ENCODE measurements at regions of chr2 and their contacts with region 1.

Region 1: GRCh38 chr2:174771631-174772471 is 7.6 kb upstream of the CHRNA1 start:
- DNase-seq: peak; percentile 85 to 93
- H3K4me3 ChIP-seq: no peak overlapping the region; a peak in 2 of 8 replicates
- H3K27ac ChIP-seq: peak overlapping the region; percentile 80
- H3K4me1 ChIP-seq: peaks cover 11 to 19% (median 12%) of the 10 kb centered on the region in 4 experiments
- H3K27me3 ChIP-seq: no peaks in the 10 kb centered on the region
- CTCF ChIP-seq: peak; percentile 79 to 94 (median 86)
- EP300 ChIP-seq: peak in 1 of 2 experiments; percentile 66; a peak in 1 of 3 replicates
- POLR2A ChIP-seq: peak in 1 of 2 experiments; percentile 52; a peak in 2 of 3 replicates
- RAD21 ChIP-seq: peak; percentile 91 to 95

Region 2: DNA sequence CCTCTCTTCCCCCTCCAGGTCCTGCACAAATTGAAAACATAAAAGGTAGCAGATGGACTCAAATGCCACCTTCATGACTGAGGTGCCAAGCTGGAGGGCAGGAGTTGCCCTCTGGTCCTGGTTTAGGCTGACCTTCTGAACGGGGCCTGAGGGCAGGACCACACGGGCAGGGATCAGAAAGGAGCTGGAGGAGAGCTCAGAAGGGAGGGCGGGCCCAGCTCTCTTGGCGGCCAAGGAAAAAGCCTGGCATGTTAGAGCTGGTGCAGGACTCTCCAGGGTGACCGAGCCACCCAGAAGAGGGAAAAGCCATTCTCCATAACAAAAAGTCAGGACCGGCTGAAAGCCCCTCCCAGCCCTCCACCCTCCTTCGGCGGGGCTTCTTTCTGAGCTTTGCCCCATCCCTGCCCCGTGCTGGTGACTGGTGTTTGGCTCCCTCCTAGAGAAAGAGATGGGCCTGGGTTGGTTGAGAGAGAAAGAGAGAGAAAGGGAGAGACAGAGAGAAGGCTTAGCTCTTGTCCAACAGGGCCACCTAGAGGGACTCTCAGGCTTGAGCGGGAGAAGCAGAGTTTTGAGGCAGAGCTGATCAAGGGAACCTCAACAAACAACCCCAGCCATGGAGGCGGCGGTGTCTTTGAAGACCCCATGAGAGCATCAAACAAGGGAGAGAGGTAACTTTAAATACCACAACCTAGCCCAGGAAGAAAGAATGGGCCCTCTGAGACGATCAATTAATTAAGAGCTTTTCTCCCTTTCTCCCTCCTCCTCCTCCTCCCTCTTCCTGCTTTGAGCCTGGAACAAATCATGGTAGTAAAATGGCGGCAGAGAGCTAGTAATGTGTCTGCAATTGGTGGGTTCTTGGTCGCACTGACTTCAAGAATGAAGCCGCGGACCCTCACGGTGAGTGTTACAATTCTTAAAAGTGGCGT is 225.0 kb before region 1 on chr2:
- CTCF ChIA-PET with region 1: no interaction called
- POLR2A ChIA-PET with region 1: no interaction called
- DNase-seq: peak; percentile 38 to 65
- H3K4me3 ChIP-seq: no peak overlapping the region
- H3K27ac ChIP-seq: no peak overlapping the region
- H3K4me1 ChIP-seq: peaks cover 0 to 2% (median 0%) of the 10 kb centered on the region in 4 experiments; a peak in 1 of 7 replicates
- H3K27me3 ChIP-seq: no peaks in the 10 kb centered on the region
- CTCF ChIP-seq: peak; percentile 31 to 74 (median 74)
- EP300 ChIP-seq: no peak; a peak in 1 of 3 replicates
- POLR2A ChIP-seq: no peak
- RAD21 ChIP-seq: peak; percentile 78 to 88

Region 3: DNA sequence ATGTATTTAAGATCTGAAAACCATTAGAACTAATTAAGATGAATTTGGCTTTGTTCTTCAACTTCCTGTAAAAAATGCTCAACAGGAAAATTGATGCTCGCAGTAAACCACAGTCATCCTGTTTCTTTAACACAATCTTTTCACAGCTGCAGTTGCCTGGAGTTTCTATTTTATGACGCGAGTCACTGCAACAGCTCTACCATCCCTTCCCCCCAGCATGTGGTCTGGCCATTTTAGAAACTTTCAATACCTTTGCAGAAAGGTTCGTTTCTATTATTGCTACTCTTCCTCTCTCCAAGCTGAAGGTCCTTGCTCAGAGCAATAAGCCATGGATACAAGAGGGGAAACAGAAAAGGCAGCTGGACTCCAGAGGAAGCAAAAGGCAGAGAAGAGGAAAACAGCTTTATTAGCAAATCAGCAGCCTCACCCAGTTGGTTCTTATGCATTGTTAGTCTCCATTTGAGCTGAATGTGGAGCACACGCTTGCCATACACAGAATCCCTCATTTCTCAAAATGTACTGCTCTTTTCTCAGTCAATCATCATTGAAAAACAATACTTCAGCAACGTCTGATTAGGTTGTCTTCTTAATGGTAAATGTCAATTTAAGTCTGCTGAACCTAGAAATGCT is 178.2 kb before region 1 on chr2:
- CTCF ChIA-PET with region 1: no interaction called
- POLR2A ChIA-PET with region 1: no interaction called
- DNase-seq: no peak
- H3K4me3 ChIP-seq: no peak overlapping the region
- H3K27ac ChIP-seq: no peak overlapping the region; the same call in 1 of the 2 replicates
- H3K4me1 ChIP-seq: peaks cover 0 to 5% (median 4%) of the 10 kb centered on the region in 4 experiments; a peak in 3 of 7 replicates
- H3K27me3 ChIP-seq: no peaks in the 10 kb centered on the region
- CTCF ChIP-seq: no peak
- EP300 ChIP-seq: no peak
- POLR2A ChIP-seq: no peak
- RAD21 ChIP-seq: no peak

Region 4: DNA sequence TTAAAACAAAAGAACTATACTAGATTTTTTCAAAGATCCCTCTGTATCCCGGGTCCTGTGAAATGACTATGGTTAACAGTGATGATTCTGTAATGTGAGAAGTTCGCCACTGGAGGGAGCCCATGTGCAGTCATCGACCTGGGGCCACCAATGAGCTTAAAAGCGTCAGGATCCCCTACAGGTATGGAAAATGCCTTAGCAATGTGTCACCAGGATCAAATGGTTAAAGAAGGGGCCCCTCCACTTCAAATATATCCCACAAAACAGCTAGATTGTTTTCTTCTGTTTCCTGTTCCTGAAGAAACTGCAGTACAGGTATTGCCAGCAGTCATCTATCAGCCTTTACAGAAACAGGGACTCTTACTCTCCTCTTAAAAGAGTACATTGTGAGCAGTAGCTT is 22.9 kb before region 1 on chr2:
- CTCF ChIA-PET with region 1: interaction called, 68 read pairs
- POLR2A ChIA-PET with region 1: interaction called, 15 read pairs
- DNase-seq: peak; percentile 66 to 89
- H3K4me3 ChIP-seq: no peak overlapping the region; a peak in 1 of 8 replicates
- H3K27ac ChIP-seq: no peak overlapping the region
- H3K4me1 ChIP-seq: peaks cover 0 to 2% (median 1%) of the 10 kb centered on the region in 4 experiments; a peak in 3 of 7 replicates
- H3K27me3 ChIP-seq: no peaks in the 10 kb centered on the region
- CTCF ChIP-seq: peak; percentile 67 to 89 (median 82)
- EP300 ChIP-seq: no peak
- POLR2A ChIP-seq: no peak
- RAD21 ChIP-seq: peak; percentile 96 to 97

Region 5: GRCh38 chr2:174797781-174798276 is 26.0 kb after region 1 on chr2:
- CTCF ChIA-PET with region 1: interaction called, 82 read pairs
- POLR2A ChIA-PET with region 1: interaction called, 4 read pairs
- DNase-seq: no peak
- H3K4me3 ChIP-seq: no peak overlapping the region
- H3K27ac ChIP-seq: 0 out of 2 replicates have a peak overlapping the region, but pooled peaks have one; percentile 4
- H3K4me1 ChIP-seq: peaks cover 6 to 22% (median 13%) of the 10 kb centered on the region in 4 experiments; a peak in 5 of 7 replicates
- H3K27me3 ChIP-seq: peaks cover 0 to 1% (median 0%) of the 10 kb centered on the region in 4 experiments; a peak in 1 of 7 replicates
- CTCF ChIP-seq: no peak
- EP300 ChIP-seq: no peak
- POLR2A ChIP-seq: 0 out of 3 replicates have a peak, but pooled peaks of 1 of the 2 experiments have one; percentile 28
- RAD21 ChIP-seq: no peak

Region 6: DNA sequence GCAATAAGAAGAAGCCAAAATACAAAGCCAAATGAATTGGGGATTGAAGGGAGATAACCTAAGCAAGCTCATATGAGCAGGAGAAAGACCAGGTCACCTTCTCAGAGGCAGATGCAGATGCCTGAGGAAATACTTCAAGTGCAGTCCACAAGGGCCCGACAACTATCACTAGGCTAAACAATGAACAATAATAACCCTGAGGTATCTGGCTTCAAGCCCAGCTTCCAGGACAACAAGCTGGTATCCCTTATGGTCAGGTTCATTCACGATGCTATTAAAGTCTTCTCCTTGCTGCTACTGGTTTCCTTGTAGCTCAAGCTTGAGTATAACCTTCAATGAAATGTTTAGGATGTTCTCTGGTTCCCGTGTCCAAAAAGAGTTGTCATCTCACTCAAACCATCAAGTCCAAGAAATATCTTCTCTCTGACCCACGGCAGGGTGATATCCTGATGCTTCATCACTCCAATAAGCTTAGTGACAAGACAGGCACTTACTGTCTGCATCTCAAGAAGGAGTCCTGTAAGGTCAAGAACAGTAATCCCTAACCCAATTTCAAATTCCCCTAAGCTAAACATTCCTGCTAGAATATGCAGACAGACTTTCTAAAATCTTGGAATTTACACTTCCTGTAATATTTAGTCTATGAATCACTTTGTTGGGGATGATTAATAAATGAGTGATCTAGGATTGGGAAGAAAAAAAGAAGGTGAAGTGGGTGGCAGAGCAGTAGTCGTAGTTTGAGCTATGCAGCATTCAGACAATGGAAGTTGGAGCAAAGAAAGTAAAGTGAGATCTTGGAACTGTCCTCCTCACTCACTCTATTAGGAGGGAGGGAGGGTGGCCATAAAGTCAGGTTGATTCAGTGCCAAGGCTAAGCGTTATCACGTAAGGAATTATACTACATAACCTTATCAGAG is 200.3 kb after region 1 on chr2:
- CTCF ChIA-PET with region 1: interaction called, 12 read pairs
- POLR2A ChIA-PET with region 1: no interaction called
- DNase-seq: no peak
- H3K4me3 ChIP-seq: no peak overlapping the region
- H3K27ac ChIP-seq: no peak overlapping the region
- H3K4me1 ChIP-seq: peaks cover 0 to 8% (median 3%) of the 10 kb centered on the region in 4 experiments; a peak in 2 of 7 replicates
- H3K27me3 ChIP-seq: no peaks in the 10 kb centered on the region
- CTCF ChIP-seq: no peak
- EP300 ChIP-seq: no peak
- POLR2A ChIP-seq: no peak
- RAD21 ChIP-seq: no peak

Region 7: GRCh38 chr2:175004980-175005732 is 233.3 kb after region 1 on chr2 and contains the start of gene CHN1:
- CTCF ChIA-PET with region 1: interaction called, 11 read pairs
- POLR2A ChIA-PET with region 1: interaction called, 14 read pairs
- DNase-seq: peak in 1 of 2 experiments; percentile 89
- H3K4me3 ChIP-seq: peak within 1 kb of the TSS; percentile 74 to 77 (median 76)
- H3K27ac ChIP-seq: peak within 1 kb of the TSS; percentile 81
- H3K4me1 ChIP-seq: peaks cover 0 to 17% (median 11%) of the 10 kb centered on the region in 4 experiments; a peak in 4 of 7 replicates
- H3K27me3 ChIP-seq: no peaks in the 10 kb centered on the region
- CTCF ChIP-seq: no peak
- EP300 ChIP-seq: no peak
- POLR2A ChIP-seq: peak; percentile 69 to 86
- RAD21 ChIP-seq: no peak
- total RNA-seq, gene CHN1: 50.4 and 54.0 TPM in 2 replicates